Right ventricle myocardium superior (tissue), 1 donor: ENCODE measurements at regions of chr10 and their contacts with region 1.

Region 1: DNA sequence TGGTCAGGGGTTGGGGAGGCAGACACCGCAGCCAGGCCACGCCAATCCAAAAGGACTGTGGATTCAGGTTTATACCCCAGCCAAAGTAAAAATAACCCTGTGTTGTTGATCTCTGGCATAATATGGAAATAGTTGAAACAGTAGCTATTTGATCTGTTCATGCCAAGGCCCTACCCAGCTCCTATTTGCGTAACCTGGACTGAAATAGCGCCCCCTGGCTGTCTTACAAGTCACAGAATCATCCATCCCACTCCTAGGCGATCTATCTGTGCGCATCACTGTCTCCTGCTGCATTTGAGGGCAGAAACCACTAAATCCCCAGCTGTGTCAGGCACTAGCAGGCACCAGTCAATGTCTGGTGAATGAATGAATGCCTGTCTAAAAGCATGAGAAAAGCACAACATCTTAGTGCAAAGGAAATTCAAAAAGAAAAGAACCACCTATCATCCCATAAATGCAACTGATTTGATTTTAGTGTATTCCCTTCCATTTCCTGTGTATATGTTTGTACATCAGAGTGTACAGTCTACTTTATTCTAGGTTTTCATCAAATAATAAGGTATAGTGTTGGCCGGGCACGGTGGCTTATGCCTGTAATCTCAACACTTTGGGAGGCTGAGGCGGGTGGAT is 160.0 kb downstream of the SLIT1 start:
- DNase-seq: no peak
- ATAC-seq: peak; percentile 42

Region 2: DNA sequence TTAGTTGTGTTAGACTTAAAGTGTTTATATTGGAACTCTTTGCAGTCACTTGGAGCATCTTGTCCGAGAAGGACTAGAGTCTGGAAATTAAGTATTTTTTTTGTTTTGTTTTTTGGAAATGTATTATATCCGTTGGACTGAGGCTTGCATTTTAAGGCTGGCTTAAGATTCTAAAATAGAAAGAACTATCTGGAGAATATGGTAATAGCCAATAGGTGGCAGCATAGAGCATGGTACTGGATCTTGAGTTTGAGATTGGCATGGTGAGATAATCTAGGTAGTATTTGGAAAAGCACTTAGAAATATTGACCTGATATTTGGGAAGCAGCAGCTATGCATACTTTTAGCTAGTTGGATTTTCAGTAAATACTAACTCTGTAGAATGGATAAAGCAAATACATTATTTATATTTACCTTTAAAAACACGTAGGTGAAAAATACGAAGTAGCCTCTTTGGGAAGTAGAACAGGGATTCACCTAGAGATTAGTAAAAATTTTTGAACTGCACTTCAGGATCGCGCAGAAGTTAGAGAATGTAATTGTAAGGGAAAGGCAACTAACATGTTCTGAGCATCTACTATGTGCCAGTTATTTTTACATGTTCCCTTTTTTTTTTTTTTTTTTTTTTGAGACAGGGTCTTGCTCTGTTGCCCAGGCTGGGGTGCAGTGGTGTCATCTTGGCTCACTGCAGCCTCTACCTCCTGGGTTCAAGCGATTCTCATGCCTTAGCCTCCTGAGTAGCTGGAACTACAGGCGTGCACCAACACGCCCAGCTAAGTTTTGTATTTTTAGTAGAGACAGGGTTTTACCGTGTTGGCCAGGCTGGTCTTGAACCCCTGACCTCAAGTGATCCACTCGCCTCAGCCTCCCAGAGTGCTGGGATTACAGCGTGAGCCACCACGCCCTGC is 115.0 kb before region 1 on chr10:
- intact Hi-C with region 1: loop called (anchors 5 kb)
- DNase-seq: no peak
- ATAC-seq: peak; percentile 53